ENCODE measurements at regions of chr19 and their contacts with region 1.

Region 1: GRCh38 chr19:56080669-56081401 is 40.3 kb downstream of the ZNF787 start:
- DNase-seq: peak; percentile 70
- ATAC-seq: peak; percentile 82
- H3K4me3 Mint-ChIP-seq: peak overlapping the region; percentile 84
- H3K27ac Mint-ChIP-seq: peak overlapping the region; percentile 55
- H3K4me1 Mint-ChIP-seq: peaks cover 17% of the 10 kb centered on the region
- H3K27me3 Mint-ChIP-seq: no peaks in the 10 kb centered on the region
- CTCF ChIP-seq: no peak

Region 2: DNA sequence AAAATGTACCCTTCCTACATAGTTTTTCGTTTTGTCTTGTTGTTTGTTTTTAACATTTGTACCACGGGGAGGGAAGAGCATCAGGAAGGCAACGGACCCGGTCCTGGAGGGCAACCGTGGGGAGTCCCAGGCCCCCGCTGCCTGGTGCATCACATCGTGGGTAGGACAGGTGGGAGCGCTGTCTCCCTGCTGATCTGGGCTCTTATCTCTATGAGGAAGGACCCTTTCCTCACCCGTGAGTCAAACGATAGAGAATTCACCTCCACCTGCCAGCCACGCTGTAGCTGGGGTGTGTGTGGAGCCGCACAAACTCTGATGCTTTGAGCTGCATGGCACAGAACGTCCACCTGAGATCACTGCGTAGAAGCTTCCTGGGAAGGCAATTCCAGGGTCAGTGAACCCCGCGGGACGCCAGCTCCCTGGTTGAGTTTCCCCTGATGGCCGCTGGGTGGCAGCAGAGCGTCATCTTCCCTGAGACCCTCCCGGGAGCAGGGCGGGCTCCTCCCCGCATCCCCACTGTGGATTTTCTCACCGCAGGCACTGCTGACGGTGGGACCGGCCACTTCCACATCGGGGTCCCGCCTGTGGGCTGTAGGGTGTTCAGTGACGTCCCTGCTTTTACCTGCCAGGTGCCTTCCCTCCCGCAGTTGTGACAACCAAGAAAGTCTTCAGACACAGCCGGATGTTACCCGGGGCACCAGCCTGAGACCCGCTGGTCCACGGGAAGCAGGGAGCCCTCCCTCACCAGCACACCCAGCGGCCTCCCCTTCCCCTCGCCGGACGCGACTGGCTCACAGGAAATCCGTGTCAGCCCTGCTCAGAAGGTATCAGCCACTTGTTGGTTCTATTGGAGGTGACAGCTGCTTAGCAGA is 14.4 kb before region 1 on chr19:
- CTCF ChIA-PET with region 1: interaction called, 12 read pairs
- POLR2A ChIA-PET with region 1: no interaction called
- intact Hi-C with region 1: no loop called
- DNase-seq: peak; percentile 61
- ATAC-seq: peak; percentile 69
- H3K4me3 Mint-ChIP-seq: peak overlapping the region; percentile 53
- H3K27ac Mint-ChIP-seq: no peak overlapping the region
- H3K4me1 Mint-ChIP-seq: peaks cover 12% of the 10 kb centered on the region
- H3K27me3 Mint-ChIP-seq: peaks cover 28% of the 10 kb centered on the region
- CTCF ChIP-seq: peak; percentile 34

Region 3: DNA sequence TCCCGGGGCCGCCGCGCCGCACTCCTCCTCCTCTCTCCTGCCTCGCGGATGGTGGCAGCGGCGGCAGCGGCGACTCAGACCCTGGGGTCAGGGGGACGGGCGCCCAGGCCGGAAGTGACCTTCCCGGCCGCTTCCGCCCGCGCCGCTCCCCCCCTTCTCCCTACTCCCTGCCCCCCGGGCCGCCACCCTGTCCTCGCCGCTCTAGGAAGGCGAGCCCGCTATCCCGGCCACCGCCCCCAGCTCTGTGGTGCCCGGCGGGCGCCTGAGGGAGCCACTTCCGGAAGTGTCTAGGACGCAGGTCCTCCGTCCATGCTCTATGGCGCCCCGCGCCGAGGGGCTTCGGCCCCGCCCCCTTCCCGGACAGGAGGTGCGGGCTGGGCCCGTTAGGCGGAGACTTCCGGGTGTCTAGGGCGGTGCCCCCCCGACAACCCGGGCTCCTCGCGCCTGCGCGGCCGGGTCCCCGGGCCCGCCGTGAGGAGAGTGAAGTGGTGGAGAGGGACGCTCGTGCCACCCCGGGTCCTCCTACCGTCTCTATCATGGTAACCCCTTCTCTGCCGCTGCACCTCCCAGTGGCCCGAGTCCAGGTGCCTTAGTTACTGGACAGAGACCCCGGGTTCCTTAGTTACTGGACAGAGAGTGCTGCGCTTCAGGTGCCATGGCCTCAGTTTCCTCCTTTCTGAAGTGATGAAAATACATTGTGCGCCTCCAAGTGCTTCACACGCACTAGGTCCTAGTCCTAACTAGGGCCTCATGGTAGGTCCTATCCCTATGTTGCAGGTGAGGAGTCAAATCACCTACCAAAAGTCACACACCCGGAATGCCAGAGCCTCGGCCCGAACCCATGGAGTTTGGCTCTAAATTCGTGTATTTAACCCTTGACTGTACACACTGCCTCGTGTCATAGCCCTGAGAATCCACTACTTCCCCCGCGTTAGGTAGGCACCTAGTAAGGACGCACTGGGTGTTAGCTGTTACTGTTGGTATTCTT is 40.6 kb after region 1 on chr19 and contains the start of gene ZNF787:
- CTCF ChIA-PET with region 1: no interaction called
- POLR2A ChIA-PET with region 1: interaction called, 13 read pairs
- intact Hi-C with region 1: loop called (anchors 1 kb)
- DNase-seq: peak; percentile 99
- ATAC-seq: peak; percentile 87
- H3K4me3 Mint-ChIP-seq: peak within 1 kb of the TSS; percentile 91
- H3K27ac Mint-ChIP-seq: peak within 1 kb of the TSS; percentile 95
- H3K4me1 Mint-ChIP-seq: peaks cover 45% of the 10 kb centered on the region
- H3K27me3 Mint-ChIP-seq: no peaks in the 10 kb centered on the region
- CTCF ChIP-seq: no peak
- total RNA-seq, gene ZNF787: 40.8 and 42.3 TPM in 2 replicates

Region 4: GRCh38 chr19:56252699-56253422 is 172.0 kb after region 1 on chr19:
- CTCF ChIA-PET with region 1: interaction called, 16 read pairs
- POLR2A ChIA-PET with region 1: interaction called, 6 read pairs
- intact Hi-C with region 1: loop called (anchors 2 kb)
- DNase-seq: peak; percentile 53
- ATAC-seq: peak; percentile 86
- H3K4me3 Mint-ChIP-seq: no peak overlapping the region
- H3K27ac Mint-ChIP-seq: no peak overlapping the region
- H3K4me1 Mint-ChIP-seq: no peaks in the 10 kb centered on the region
- H3K27me3 Mint-ChIP-seq: no peaks in the 10 kb centered on the region
- CTCF ChIP-seq: no peak

Region 5: GRCh38 chr19:56350416-56351045 is 269.7 kb after region 1 on chr19:
- CTCF ChIA-PET with region 1: interaction called, 8 read pairs
- POLR2A ChIA-PET with region 1: no interaction called
- intact Hi-C with region 1: loop called (anchors 1 kb)
- DNase-seq: no peak
- ATAC-seq: no peak
- H3K4me3 Mint-ChIP-seq: no peak overlapping the region
- H3K27ac Mint-ChIP-seq: no peak overlapping the region
- H3K4me1 Mint-ChIP-seq: no peaks in the 10 kb centered on the region
- H3K27me3 Mint-ChIP-seq: no peaks in the 10 kb centered on the region
- CTCF ChIP-seq: no peak

Measured in activated B cell treated with CpG ODN at 0.5 μM for 24 hours (primary cell).